ENCODE measurements at regions of chr17 and their contacts with region 1.

Region 1: GRCh38 chr17:64145757-64146417 is 15.9 kb upstream of the ERN1 start:
- DNase-seq: peak; percentile 90 to 98 (median 95)
- ATAC-seq: peak; percentile 91 to 95 (median 94)
- H3K4me3 ChIP-seq: peak overlapping the region; percentile 55 to 77
- H3K4me3 Mint-ChIP-seq: no peak overlapping the region
- H3K27ac ChIP-seq: peak overlapping the region; percentile 87
- H3K27ac Mint-ChIP-seq: no peak overlapping the region
- H3K4me1 ChIP-seq: peaks cover 14 to 18% of the 10 kb centered on the region in 2 experiments
- H3K4me1 Mint-ChIP-seq: peaks cover 24 to 28% (median 24%) of the 10 kb centered on the region in 3 donors
- H3K27me3 ChIP-seq: no peaks in the 10 kb centered on the region
- H3K27me3 Mint-ChIP-seq: no peaks in the 10 kb centered on the region

Region 2: GRCh38 chr17:63976702-63977101 is 169.2 kb before region 1 on chr17:
- CTCF ChIA-PET with region 1: no interaction called
- POLR2A ChIA-PET with region 1: interaction called in 1 of 2 experiments, 10 read pairs
- DNase-seq: no peak
- ATAC-seq: no peak
- H3K4me3 ChIP-seq: no peak overlapping the region
- H3K4me3 Mint-ChIP-seq: no peak overlapping the region
- H3K27ac ChIP-seq: no peak overlapping the region
- H3K27ac Mint-ChIP-seq: no peak overlapping the region
- H3K4me1 ChIP-seq: peaks cover 0 to 2% of the 10 kb centered on the region in 2 experiments
- H3K4me1 Mint-ChIP-seq: peaks cover 0 to 14% (median 2%) of the 10 kb centered on the region in 3 donors
- H3K27me3 ChIP-seq: peaks cover 0 to 16% of the 10 kb centered on the region in 2 experiments
- H3K27me3 Mint-ChIP-seq: no peaks in the 10 kb centered on the region

Region 3: GRCh38 chr17:64020056-64020766 is 125.7 kb before region 1 on chr17 and contains the start of gene ICAM2:
- CTCF ChIA-PET with region 1: interaction called in 1 of 2 experiments, 11 read pairs
- POLR2A ChIA-PET with region 1: interaction called, 12 to 18 read pairs
- DNase-seq: peak; percentile 71 to 97 (median 94)
- ATAC-seq: peak; percentile 79 to 86 (median 85)
- H3K4me3 ChIP-seq: peak within 1 kb of the TSS; percentile 92 to 96
- H3K4me3 Mint-ChIP-seq: peak within 1 kb of the TSS; percentile 93 to 100 (median 97)
- H3K27ac ChIP-seq: peak within 1 kb of the TSS; percentile 100
- H3K27ac Mint-ChIP-seq: peak within 1 kb of the TSS; percentile 96 to 100
- H3K4me1 ChIP-seq: peaks cover 50 to 71% of the 10 kb centered on the region in 2 experiments
- H3K4me1 Mint-ChIP-seq: peaks cover 71 to 83% (median 72%) of the 10 kb centered on the region in 3 donors
- H3K27me3 ChIP-seq: no peaks in the 10 kb centered on the region
- H3K27me3 Mint-ChIP-seq: no peaks in the 10 kb centered on the region
- total RNA-seq, gene ICAM2: 69.6 to 132 (median 116) TPM

Region 4: DNA sequence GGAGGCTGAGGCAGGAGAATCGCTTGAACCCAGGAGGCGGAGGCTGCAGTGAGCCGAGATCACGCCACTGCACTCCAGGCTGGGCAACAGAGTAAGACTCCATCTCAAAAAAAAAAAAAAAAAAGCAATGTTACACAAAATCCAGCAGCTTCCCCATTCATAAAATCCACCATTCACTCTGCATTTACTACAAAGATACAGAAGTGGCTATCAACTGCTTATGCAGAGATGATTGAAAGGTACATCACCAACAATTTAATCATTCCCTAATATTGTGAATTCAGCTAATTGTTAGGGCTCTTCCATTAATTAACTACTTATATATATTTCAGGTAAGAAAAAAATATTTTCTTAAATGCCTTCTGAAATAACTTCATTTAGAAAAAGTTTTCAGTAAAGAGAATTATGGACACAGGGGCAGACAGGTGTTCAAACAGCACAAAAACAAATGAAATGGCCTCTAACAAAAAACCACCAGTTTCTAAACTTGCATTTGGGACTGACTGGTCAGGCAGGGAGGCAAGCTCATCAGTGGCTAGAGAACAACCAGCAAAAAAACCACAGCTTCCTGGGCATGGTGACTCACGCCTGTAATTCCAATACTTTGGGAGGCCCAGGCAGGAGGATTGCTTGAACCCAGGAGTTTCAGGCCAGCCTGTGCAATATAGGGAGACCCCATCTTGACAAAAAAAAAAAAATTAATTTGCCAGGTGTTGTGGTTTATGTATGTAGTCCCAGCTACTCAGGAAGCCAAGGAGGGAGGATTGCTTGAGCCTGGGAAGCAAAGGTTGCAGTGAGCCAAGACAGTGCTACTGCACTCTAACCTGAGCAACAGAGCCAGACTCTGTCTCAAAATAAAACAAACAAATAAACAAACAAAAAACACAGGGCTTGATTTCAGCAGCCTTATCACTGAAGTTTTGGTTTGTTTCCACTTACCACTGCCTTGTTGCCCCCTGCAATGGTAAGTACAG is 42.2 kb before region 1 on chr17:
- CTCF ChIA-PET with region 1: interaction called in 1 of 2 experiments, 5 read pairs
- POLR2A ChIA-PET with region 1: interaction called in 1 of 2 experiments, 10 read pairs
- DNase-seq: no peak
- ATAC-seq: no peak
- H3K4me3 ChIP-seq: no peak overlapping the region
- H3K4me3 Mint-ChIP-seq: no peak overlapping the region
- H3K27ac ChIP-seq: no peak overlapping the region
- H3K27ac Mint-ChIP-seq: peak overlapping the region; percentile 22 to 60
- H3K4me1 ChIP-seq: peaks cover 16 to 45% of the 10 kb centered on the region in 2 experiments
- H3K4me1 Mint-ChIP-seq: peaks cover 56 to 85% (median 59%) of the 10 kb centered on the region in 3 donors
- H3K27me3 ChIP-seq: no peaks in the 10 kb centered on the region
- H3K27me3 Mint-ChIP-seq: no peaks in the 10 kb centered on the region

Region 5: DNA sequence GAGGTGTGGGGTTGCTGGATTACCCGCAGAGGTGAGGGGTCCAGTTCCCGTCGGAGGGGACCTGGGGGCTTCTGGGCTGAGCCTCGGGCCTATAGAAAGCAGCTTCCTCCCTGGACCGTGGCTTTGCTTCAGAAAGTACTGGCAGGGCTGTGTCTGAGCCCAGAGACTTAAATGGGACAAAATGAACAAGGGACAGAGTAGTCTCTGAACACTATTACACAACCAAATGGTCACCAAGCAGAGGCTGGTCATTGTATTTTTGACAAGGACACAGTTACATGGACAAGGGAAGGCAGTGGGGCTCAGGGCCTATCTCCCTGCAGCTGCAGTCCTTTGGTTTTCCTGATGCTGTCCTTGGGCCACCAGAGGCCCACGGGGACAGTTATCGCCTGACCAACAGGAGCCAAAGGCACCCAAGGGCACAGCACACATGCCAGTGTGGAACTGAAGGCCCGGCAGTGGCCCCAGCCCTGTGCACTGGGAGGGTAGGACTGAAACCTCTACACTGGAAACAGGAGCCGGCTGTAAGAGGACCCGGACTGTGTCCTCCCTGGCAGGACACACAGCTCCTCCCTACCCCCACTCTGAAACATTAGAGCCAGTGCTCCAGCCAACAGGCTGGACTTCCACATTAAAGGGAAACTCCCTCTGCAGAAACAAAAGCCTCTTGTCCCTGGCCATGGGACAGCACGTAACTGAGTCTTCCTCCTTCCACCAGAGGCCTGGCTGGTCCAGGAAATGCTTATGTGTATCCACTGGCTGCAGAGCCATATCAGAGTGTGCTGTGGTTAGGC is 10.1 kb after region 1 on chr17:
- CTCF ChIA-PET with region 1: no interaction called
- POLR2A ChIA-PET with region 1: no interaction called
- DNase-seq: no peak
- ATAC-seq: no peak
- H3K4me3 ChIP-seq: no peak overlapping the region
- H3K4me3 Mint-ChIP-seq: no peak overlapping the region
- H3K27ac ChIP-seq: no peak overlapping the region
- H3K27ac Mint-ChIP-seq: no peak overlapping the region
- H3K4me1 ChIP-seq: no peaks in the 10 kb centered on the region
- H3K4me1 Mint-ChIP-seq: no peaks in the 10 kb centered on the region
- H3K27me3 ChIP-seq: no peaks in the 10 kb centered on the region
- H3K27me3 Mint-ChIP-seq: no peaks in the 10 kb centered on the region

Region 6: DNA sequence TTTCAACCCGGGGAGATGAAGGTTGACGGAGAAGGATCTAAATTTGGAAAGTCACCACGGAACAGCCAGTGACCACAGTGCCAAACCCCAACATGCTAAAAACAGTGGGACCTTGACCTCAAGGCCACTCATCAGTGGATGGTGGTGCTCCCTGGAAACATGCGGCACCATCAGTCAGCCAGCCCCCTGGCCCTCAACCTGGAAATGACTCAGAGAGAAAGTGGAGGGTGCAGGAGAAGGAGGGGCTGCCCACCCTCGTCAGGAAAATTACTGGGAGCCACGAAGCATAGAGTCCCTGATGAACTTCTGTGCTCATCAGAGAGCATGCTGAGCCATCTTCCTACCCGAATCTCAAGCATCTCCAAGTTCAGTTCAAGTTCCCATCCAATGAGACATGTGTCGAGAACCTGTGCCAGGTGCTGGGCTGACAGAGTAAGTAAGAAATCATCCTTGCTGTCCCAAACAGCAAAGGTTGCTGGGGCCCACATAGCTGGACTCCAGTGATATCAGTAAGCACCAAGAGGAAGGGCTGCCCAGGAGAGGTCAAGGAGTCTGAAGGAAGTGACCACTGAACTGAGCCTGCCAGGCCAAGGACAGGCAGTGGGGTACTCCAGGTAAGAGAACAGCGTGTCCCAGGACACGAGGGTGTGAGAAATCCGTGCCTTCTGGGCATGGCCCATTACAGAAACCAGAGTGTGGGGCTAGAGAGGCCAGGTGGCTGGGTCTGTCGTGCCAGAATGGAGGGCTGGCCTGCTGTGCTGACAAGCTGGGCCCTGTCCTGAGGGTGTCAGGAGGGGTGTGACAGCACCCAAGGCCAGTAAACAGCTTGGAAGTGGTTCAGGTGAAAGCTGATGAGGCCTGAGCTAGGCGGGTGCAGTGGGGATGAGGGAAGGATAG is 239.5 kb after region 1 on chr17:
- CTCF ChIA-PET with region 1: interaction called in 1 of 2 experiments, 10 read pairs
- POLR2A ChIA-PET with region 1: no interaction called
- DNase-seq: peak in 7 of 35 experiments; percentile 8 to 42 (median 32)
- ATAC-seq: peak in 3 of 4 experiments; percentile 28 to 63 (median 32)
- H3K4me3 ChIP-seq: no peak overlapping the region
- H3K4me3 Mint-ChIP-seq: peak overlapping the region in 2 of 3 donors; percentile 42 to 50
- H3K27ac ChIP-seq: no peak overlapping the region
- H3K27ac Mint-ChIP-seq: peak overlapping the region in 1 of 2 donors; percentile 68
- H3K4me1 ChIP-seq: peaks cover 16 to 64% of the 10 kb centered on the region in 2 experiments
- H3K4me1 Mint-ChIP-seq: peaks cover 49 to 75% (median 72%) of the 10 kb centered on the region in 3 donors
- H3K27me3 ChIP-seq: no peaks in the 10 kb centered on the region
- H3K27me3 Mint-ChIP-seq: peaks cover 0 to 4% of the 10 kb centered on the region in 2 donors

Measured in T-cell (primary cell).